Activated naive CD4-positive, alpha-beta T cell treated with anti-CD3 and anti-CD28 coated beads for 36 hours (primary cell): ENCODE measurements at regions of chr5 and their contacts with region 1.

Region 1: DNA sequence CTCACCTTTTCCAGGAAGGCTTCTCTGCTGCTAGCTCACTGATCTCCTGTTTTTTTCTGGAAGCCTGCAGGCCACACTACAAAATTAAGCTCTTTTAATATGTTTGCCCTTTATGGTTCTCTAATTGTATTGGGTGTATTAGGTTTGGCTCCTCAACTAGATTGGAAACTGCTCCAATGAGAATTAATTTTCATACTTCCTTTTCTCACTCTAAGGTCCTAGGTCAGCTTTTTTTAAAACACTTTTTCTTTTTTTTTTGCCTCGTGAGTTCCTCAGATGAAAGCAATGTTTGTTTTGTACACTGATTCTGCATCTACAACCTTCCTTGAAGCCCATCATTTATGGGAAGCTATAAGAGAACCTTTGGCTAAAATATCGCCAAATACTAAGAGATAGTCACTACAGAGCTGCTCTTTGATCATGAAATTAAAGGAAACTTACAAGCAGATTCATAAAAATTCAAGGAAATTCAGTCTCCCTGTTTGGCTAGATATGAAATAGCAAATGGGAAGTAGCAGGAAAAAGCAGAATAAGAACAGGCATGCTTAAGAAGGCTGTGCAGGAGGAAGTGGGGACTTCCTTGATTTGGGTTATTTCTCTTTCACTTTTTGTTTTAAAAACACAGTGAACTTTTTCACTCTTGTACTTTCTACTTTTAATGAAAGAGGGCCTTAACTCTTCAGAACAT is 55.2 kb upstream of the FYB1 start:
- DNase-seq: no peak
- H3K4me3 Mint-ChIP-seq: peak overlapping the region; percentile 74
- H3K27ac Mint-ChIP-seq: peak overlapping the region; percentile 94
- H3K4me1 Mint-ChIP-seq: peaks cover 51% of the 10 kb centered on the region
- H3K27me3 Mint-ChIP-seq: no peaks in the 10 kb centered on the region

Region 2: DNA sequence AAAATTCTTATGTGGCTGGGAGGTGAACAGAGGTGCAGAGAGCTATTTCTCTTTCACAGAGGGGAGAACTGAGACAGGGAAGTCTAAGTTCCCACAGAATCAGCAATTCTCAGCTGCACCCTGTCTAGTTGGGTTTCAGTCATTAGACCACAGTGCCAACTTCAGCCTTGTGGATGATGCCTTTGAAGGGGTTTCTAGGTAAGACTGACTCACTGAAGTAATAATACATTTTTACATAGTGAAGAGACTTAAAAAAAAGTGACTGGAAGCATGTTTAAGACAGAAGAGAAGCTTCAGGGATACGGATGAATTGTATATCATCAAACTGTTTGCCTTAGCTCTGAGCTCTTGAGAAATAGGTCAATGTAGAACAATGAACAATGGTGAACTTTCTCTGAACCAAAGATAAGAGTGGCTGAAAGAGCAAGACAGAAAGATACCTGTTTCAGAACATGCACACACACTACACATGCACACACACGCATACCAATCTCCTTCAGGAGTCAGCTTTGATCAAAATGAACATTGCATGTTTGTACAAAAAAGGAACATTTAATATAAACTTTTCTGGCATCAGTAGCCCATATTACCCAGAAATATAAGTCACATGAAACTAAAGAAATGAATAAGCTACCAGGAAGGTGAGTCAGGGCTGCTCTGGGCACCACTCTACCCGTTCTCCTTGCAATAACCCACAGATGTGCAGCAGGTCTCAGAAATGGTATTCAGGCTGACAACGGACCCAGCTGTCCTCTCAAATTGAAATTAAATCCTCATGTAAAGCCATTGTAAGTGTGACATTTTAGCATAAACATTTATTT is 42.6 kb before region 1 on chr5:
- CTCF ChIA-PET with region 1: interaction called, 317 read pairs
- intact Hi-C with region 1: loop called (anchors 1 kb)
- DNase-seq: peak; percentile 72
- H3K4me3 Mint-ChIP-seq: peak overlapping the region; percentile 52
- H3K27ac Mint-ChIP-seq: peak overlapping the region; percentile 90
- H3K4me1 Mint-ChIP-seq: peaks cover 14% of the 10 kb centered on the region
- H3K27me3 Mint-ChIP-seq: no peaks in the 10 kb centered on the region

Region 3: DNA sequence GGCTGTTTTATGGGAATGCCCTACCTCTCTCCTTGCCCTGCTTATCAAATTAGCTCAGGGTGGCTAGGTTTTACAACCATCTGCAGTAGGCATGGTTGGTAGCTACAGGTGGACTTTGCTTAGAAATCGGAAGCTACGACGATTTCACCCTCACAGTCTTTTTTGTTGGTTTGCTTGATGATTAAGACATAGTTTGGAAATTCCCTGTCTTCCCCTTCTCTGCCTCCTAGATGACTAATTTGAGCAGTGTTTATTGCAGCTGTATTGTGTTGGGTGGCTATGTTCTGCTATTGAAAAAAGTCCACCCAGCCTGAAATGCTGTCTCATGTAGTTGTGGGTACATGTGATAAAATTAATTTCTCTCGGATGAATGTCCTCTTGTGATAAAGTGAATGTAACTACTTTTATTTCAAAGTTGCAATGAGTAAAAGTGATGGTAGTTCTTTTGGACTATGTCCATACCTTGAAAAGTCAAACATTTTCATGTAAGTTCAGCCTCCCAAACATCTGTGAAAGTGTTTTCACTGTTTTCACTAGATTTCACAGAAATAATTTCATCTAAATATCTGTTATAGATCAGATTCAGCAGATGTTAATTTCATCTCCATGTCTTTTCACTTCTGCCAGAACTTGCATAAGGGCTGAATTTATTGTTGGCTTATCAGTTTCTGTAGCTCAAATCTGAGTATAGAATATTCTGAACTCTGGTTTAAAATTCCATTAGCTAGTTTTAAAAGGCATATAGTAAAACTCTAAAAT is 17.9 kb before region 1 on chr5:
- CTCF ChIA-PET with region 1: no interaction called
- intact Hi-C with region 1: loop called (anchors 1 kb)
- DNase-seq: peak; percentile 20
- H3K4me3 Mint-ChIP-seq: no peak overlapping the region
- H3K27ac Mint-ChIP-seq: no peak overlapping the region
- H3K4me1 Mint-ChIP-seq: peaks cover 16% of the 10 kb centered on the region
- H3K27me3 Mint-ChIP-seq: no peaks in the 10 kb centered on the region